Panc1 (cell line): ENCODE measurements at regions of chr12 and their contacts with region 1.

Region 1: GRCh38 chr12:75503866-75504265 is 7.5 kb downstream of the KRR1 start:
- DNase-seq: no peak
- ATAC-seq: no peak
- H3K4me3 ChIP-seq: no peak overlapping the region
- H3K27ac ChIP-seq: no peak overlapping the region
- H3K4me1 ChIP-seq: peaks cover 27% of the 10 kb centered on the region
- H3K27me3 ChIP-seq: no peaks in the 10 kb centered on the region
- CTCF ChIP-seq: no peak

Region 2: GRCh38 chr12:75491169-75491568 is 12.7 kb before region 1 on chr12:
- CTCF ChIA-PET with region 1: no interaction called
- POLR2A ChIA-PET with region 1: interaction called, 11 read pairs
- in situ Hi-C with region 1: no loop called
- intact Hi-C with region 1: no loop called
- DNase-seq: no peak
- ATAC-seq: no peak
- H3K4me3 ChIP-seq: no peak overlapping the region
- H3K27ac ChIP-seq: no peak overlapping the region
- H3K4me1 ChIP-seq: peaks cover 28% of the 10 kb centered on the region
- H3K27me3 ChIP-seq: no peaks in the 10 kb centered on the region
- CTCF ChIP-seq: no peak

Region 3: GRCh38 chr12:75606151-75606550 is 102.3 kb after region 1 on chr12:
- CTCF ChIA-PET with region 1: no interaction called
- POLR2A ChIA-PET with region 1: no interaction called
- in situ Hi-C with region 1: no loop called
- intact Hi-C with region 1: no loop called
- DNase-seq: no peak
- ATAC-seq: no peak
- H3K4me3 ChIP-seq: no peak overlapping the region
- H3K27ac ChIP-seq: peak overlapping the region; percentile 65; the same call in 1 of the 2 replicates
- H3K4me1 ChIP-seq: peaks cover 2% of the 10 kb centered on the region; the same call in 1 of the 2 replicates
- H3K27me3 ChIP-seq: no peaks in the 10 kb centered on the region
- CTCF ChIP-seq: no peak

Region 4: DNA sequence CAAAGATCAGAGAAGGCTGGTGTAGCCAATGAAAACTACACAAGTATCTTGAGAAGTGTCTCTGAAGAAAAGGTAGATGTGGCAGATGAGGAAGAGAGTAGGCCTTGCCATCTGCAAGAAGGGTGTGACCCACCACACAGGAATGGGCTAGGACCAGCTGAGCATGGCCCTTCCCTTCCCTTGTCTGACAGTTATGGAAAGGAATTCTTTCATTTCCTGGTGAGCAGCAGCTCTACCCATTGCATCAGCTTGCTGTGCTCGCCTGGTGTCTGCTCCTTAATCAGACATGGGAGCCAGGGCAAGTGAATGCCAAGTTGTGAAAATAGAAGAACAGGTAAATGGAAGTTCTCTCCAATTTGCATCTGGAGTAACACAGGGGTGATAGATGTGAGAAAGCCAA is 152.8 kb after region 1 on chr12:
- CTCF ChIA-PET with region 1: no interaction called
- POLR2A ChIA-PET with region 1: no interaction called
- in situ Hi-C with region 1: no loop called
- intact Hi-C with region 1: no loop called
- DNase-seq: no peak
- ATAC-seq: no peak
- H3K4me3 ChIP-seq: no peak overlapping the region
- H3K27ac ChIP-seq: peak overlapping the region; percentile 94
- H3K4me1 ChIP-seq: peaks cover 37% of the 10 kb centered on the region
- H3K27me3 ChIP-seq: no peaks in the 10 kb centered on the region
- CTCF ChIP-seq: no peak

Region 5: DNA sequence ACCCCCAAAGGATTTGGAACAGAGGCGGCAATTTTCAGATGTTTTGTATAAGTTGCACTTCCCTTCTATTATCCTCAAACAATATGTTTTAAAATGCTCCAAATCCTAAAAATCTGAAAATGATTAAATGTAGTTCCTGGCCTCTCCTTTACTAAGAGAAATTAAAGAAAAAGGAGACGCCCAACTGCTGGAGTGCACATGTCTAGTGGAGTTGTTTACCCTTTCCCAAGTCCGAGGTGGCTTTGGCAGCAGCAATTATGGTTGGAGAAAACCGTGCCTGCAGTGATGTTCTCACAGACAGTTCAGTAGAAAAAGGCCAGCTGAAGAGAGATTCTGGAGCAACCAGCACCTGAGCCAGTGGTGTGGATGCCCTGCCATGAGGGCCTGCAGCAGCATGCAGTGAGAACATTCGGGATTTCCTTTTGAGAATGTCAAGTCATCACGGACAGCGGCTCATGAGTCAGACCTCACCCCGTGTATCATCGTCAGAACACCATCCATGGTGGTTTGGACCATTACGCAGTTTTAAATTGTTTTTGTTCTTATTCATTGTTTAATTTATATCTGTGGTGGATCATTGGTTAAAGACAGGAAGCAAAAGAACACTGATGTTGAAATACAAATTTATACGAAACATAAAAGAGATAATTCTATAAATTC is 186.6 kb after region 1 on chr12:
- CTCF ChIA-PET with region 1: no interaction called
- POLR2A ChIA-PET with region 1: no interaction called
- in situ Hi-C with region 1: no loop called
- intact Hi-C with region 1: no loop called
- DNase-seq: no peak
- ATAC-seq: no peak; the same call in 1 of the 2 replicates
- H3K4me3 ChIP-seq: no peak overlapping the region
- H3K27ac ChIP-seq: peak overlapping the region; percentile 39; the same call in 1 of the 2 replicates
- H3K4me1 ChIP-seq: no peaks in the 10 kb centered on the region
- H3K27me3 ChIP-seq: no peaks in the 10 kb centered on the region
- CTCF ChIP-seq: no peak

Region 6: GRCh38 chr12:76113800-76114757 is 610.2 kb after region 1 on chr12:
- CTCF ChIA-PET with region 1: no interaction called
- POLR2A ChIA-PET with region 1: no interaction called
- in situ Hi-C with region 1: no loop called
- intact Hi-C with region 1: no loop called
- DNase-seq: no peak
- ATAC-seq: no peak
- H3K4me3 ChIP-seq: no peak overlapping the region
- H3K27ac ChIP-seq: no peak overlapping the region
- H3K4me1 ChIP-seq: no peaks in the 10 kb centered on the region
- H3K27me3 ChIP-seq: no peaks in the 10 kb centered on the region
- CTCF ChIP-seq: no peak